Adrenal gland (tissue), 19 donors: ENCODE measurements at regions of chr16 and their contacts with region 1.

Region 1: GRCh38 chr16:70695331-70696070 is 9.6 kb upstream of the MTSS2 start:
- DNase-seq: peak in 6 of 7 donors; percentile 63 to 84 (median 71)
- H3K4me3 ChIP-seq: no peak overlapping the region
- H3K27ac ChIP-seq: peak overlapping the region in 4 of 5 donors; percentile 16 to 63 (median 43)
- H3K4me1 ChIP-seq: peaks cover 35 to 59% of the 10 kb centered on the region in 2 donors
- H3K27me3 ChIP-seq: no peaks in the 10 kb centered on the region
- CTCF ChIP-seq: peak in 5 of 6 experiments; percentile 17 to 45 (median 26)
- POLR2A ChIP-seq: peak in 1 of 2 donors; percentile 22

Region 2: DNA sequence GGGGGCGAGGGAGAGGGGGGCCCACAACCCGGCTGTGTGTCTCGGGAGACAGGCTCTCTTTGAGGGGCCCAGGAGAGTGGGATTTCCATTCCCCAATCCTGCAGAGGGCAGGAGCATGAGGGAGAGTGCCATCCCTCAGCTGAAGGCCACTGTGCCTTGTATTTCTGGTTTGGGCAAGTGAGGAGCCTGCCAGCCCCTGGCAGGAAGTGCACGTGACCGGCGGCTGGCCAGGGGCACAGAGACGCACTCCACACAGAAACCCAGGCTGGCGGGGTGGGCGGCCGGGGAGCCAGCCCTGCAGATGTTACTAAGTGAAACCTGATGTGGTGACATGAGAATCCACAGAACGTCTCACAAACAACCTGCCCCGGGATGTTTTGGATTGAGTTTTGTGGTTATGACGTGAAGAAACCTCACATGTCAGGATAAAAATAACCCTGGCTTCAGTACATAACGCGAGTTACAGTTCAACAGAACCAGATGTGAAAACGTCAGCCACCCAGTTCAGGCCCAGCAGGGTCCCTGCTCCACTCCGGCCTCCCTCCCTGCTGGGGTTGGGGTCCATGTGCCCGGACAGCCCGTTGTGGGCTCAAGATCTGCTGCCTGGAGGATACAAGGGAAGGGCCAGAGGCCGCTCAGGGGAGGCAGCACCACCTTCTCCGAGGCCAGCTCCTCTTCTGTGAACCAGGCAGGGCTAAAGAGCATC is 42.0 kb after region 1 on chr16:
- intact Hi-C with region 1: loop called (anchors 5 kb)
- DNase-seq: peak; percentile 61 to 88 (median 73)
- H3K4me3 ChIP-seq: no peak overlapping the region
- H3K27ac ChIP-seq: peak overlapping the region in 4 of 5 donors; percentile 77 to 91 (median 84)
- H3K4me1 ChIP-seq: peaks cover 16 to 33% of the 10 kb centered on the region in 2 donors
- H3K27me3 ChIP-seq: no peaks in the 10 kb centered on the region
- CTCF ChIP-seq: no peak
- POLR2A ChIP-seq: peak in 1 of 2 donors; percentile 42